Activated CD4-positive, alpha-beta T cell treated with anti-CD3 and anti-CD28 coated beads, Interleukin-2, amount 10 ng/mL, durations not matched to agents 24 days and 14 days (primary cell): ENCODE measurements at regions of chr1 and their contacts with region 1.

Region 1: DNA sequence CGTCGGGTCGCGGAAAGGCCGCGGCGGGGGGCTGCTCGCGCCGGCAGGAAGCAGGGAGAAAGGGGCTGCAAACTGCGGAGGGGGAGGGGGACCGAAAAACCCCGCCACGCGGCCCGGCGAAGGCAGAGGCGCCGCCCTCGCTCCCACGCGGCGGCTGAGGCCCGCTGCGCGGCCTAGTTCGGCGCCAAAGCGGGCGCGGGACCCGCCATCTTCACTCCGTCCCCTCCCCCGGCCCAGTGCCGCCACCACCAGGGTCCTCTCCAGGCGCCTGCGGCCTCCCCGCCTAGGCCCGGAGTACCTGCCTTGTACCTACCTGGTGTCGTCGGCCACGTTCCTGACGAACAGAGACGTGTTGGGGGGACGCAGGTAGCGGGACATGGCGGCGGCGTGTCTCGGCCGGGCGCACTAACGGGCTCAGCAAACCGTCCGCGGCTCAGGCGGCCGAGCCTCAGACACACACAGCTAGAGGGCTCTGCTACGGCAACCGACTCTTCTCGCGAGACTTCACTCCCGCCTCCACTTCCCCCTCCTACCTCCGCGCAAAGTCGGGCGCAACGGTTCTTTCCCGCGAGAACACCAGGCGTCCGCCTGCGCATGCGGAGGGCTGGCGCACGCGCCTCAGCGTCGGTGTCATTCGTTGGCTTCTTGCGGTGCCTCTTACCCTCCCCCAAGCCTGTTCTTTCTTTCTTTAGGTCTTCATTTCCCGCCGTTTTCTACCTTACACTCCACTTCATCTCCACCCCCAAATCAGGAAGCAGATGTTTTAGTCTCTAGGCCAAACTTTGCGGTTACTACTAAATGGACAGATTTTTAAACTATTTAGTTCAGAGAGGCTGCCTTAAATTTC is at the start of gene SRSF10:
- DNase-seq: peak; percentile 99
- H3K4me3 Mint-ChIP-seq: peak within 1 kb of the TSS; percentile 98
- H3K27ac Mint-ChIP-seq: peak within 1 kb of the TSS; percentile 96
- H3K4me1 Mint-ChIP-seq: peaks cover 30% of the 10 kb centered on the region
- H3K27me3 Mint-ChIP-seq: peaks cover 2% of the 10 kb centered on the region
- total RNA-seq, gene SRSF10: 236 and 247 TPM in 2 replicates

Region 2: DNA sequence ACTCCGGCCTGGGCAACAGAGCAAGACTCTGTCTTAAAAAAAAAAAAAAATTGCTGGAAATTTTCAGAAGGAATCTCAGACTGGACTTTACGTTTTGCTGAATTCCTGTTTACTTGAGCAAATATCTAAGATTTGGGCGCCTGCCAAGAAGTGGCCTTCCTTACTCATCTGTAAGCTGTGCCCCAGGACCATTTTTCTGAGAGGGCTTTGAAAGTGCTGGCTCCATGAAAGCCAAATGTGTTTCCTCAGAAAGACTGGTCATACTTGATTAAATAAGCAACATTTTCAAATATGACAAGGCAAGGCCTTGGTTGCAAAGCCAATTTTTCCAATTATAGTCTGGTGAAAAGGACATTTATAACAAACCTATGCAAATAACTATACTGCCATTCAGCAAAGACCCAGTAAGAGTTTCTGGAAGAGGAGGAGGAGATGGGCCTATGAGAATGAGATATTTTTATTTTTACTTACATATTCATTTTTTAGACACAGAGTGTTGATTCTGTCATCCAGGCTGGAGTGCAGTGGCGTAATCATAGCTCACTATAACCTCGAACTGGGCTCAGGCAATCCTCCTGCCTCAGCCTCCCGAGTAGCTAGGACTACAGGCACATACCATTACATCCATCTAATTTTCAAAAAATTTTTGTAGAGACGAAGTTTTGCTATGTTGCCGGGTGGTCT is 706.5 kb before region 1 on chr1:
- intact Hi-C with region 1: no loop called
- DNase-seq: no peak
- H3K4me3 Mint-ChIP-seq: no peak overlapping the region
- H3K27ac Mint-ChIP-seq: no peak overlapping the region
- H3K4me1 Mint-ChIP-seq: no peaks in the 10 kb centered on the region
- H3K27me3 Mint-ChIP-seq: peaks cover 14% of the 10 kb centered on the region

Region 3: DNA sequence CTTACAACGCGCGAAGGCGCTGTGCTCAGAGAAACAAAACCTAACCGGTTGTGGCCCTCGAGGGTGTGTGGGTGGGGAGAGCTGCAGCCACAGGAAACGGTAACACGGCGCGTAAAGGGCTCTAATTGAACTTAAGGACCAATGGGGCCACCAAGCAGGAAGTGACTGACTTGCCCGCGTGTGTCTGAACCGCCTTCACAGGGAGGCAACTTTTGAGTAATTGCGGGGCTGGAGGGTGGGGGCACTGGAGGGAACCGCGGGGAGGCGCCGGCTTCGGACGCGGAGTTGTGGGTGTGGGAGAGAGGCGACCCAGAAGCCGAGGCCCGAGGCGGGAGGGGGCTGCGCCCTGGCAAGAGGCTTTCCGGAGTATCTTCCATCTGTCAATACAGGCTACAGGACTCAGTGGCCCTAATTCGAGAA is 21.1 kb before region 1 on chr1:
- intact Hi-C with region 1: loop called (anchors 1 kb)
- DNase-seq: peak; percentile 97
- H3K4me3 Mint-ChIP-seq: peak overlapping the region; percentile 100
- H3K27ac Mint-ChIP-seq: peak overlapping the region; percentile 100
- H3K4me1 Mint-ChIP-seq: peaks cover 47% of the 10 kb centered on the region
- H3K27me3 Mint-ChIP-seq: no peaks in the 10 kb centered on the region

Region 4: DNA sequence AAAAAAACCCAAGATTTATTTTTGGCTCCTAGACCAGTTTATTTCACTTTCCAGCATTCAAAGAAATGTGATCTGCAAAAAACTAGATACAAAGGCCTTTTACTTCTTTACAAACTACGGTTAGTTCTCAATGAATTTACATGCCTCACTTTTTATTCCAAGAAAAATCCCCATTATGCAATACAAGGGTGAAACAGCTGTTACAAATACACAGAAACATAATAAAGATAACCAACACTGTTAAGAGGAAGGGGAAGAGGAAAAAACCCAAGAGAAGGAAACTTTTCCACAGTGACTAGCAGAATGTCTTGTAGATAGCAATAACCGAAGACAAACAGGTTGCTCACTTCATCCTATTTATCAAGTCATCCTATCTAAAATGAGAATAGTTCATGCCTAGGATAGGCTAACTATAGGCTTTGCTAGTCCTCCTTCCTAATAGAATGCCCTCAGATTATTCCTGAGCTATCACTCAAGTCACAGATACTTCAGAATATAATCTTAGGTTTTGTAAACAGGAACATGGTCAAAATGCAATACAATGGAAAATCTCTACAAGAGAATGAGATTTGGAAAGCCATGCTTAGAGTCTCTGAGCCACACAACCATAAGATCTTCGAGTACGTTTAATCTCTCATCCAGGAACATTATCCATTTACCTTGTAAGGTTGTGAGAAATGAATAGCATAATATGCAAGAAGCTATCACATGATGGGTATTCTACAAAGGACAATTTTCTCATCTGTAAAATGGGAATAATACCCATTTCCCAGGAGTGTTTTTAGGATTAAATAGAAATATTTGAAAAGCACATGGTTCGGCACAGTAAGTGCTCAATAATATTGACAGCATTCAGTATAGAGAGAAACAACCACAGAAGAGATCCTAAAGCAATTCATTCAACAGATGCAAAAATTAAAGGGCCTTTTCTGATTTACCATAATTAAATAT is 15.0 kb before region 1 on chr1:
- intact Hi-C with region 1: loop called (anchors 1 kb)
- DNase-seq: no peak
- H3K4me3 Mint-ChIP-seq: peak overlapping the region; percentile 23
- H3K27ac Mint-ChIP-seq: peak overlapping the region; percentile 79
- H3K4me1 Mint-ChIP-seq: peaks cover 41% of the 10 kb centered on the region
- H3K27me3 Mint-ChIP-seq: no peaks in the 10 kb centered on the region

Region 5: DNA sequence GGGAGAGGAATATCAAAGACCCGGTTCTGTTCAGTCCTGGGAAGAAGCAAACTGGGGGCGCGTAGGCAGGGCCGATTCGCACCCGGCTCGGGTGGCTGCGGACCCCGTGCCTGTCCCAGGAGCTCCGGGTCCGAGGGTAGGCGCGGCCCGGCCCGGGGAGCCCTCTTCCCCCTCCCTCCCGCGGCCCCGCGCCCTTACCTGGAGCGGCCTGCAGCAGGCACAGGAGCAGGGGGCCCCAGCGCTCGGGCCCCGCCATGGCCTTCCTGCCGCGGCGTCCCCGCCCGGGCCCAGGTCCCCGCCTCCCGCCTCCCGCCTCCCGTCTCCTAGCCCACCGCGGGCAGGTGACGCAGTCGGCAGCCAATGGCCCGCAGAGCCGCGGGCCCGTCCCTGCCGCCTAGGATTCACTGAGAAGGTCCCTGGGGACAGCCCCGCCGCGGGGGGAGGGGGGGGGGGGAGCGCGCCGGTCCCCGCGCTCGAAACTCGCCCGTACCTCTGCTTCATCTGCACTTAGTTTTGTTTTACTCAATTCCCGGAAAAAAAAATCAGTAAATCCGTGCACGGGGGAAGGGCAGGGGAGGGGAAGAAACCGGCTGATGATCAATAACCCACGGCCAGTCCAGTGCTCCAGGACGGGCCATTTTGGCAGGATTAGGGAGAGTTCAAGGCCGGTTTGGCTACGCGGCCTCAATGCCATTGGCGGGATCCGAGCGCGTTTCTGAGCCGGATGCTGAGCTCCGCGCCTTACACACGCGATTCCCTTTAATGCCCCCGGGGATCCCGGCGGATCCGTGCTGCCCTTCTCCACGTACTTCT is 207.1 kb after region 1 on chr1 and contains the start of gene IFNLR1:
- intact Hi-C with region 1: loop called (anchors 5 kb)
- DNase-seq: peak; percentile 90
- H3K4me3 Mint-ChIP-seq: peak within 1 kb of the TSS; percentile 82
- H3K27ac Mint-ChIP-seq: peak within 1 kb of the TSS; percentile 78
- H3K4me1 Mint-ChIP-seq: peaks cover 34% of the 10 kb centered on the region
- H3K27me3 Mint-ChIP-seq: peaks cover 2% of the 10 kb centered on the region
- total RNA-seq, gene IFNLR1: 5.3 and 5.6 TPM in 2 replicates